Esophagus muscularis mucosa (tissue), 4 donors: ENCODE measurements at regions of chr9 and their contacts with region 1.

Region 1: DNA sequence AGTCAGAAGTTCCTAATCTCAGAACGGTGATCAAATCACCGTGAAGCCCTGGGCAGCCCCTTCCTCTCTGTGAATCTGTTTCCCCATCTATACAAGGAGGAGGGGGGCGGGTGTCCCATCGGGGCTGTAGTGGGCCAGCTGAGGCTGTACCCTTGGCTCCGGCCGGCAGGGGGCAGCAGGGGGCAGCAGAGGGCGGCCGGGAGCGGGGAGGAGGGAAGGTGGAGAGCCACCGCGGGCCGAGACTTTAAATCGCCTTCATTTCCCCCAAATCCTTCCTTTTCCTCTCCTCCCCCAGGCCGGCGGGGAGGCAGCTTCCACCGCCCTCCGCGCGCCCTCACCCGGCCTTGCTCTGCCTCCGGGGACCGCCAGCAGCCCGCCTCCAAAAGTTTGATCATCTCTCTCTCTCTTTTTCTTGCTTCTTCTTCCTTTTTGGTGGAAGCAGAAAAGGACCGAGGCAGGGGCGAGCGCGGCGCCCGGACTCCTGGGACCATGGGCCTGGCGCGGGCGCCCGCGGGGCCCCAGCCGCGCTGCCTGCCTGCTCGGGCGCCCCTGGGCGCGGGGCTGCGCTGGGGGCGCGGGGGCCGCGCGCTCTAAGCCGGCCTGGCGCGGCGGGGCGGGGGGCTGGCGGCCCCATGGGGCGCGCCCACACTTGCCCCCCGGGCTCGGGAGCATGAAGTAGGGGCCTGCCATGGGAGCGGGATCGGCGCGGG is at the start of gene COL27A1:
- DNase-seq: peak; percentile 95
- H3K4me3 ChIP-seq: peak within 1 kb of the TSS; percentile 59 to 74 (median 62)
- H3K27ac ChIP-seq: peak within 1 kb of the TSS; percentile 66 to 74 (median 68)
- H3K4me1 ChIP-seq: peaks cover 18 to 40% (median 38%) of the 10 kb centered on the region in 4 donors
- H3K27me3 ChIP-seq: peaks cover 9 to 56% (median 30%) of the 10 kb centered on the region in 4 donors
- CTCF ChIP-seq: peak; percentile 86 to 98 (median 97)
- EP300 ChIP-seq: no peak
- POLR2A ChIP-seq: no peak
- total RNA-seq, gene COL27A1: 1.8 to 3.3 (median 2.7) TPM

Region 2: DNA sequence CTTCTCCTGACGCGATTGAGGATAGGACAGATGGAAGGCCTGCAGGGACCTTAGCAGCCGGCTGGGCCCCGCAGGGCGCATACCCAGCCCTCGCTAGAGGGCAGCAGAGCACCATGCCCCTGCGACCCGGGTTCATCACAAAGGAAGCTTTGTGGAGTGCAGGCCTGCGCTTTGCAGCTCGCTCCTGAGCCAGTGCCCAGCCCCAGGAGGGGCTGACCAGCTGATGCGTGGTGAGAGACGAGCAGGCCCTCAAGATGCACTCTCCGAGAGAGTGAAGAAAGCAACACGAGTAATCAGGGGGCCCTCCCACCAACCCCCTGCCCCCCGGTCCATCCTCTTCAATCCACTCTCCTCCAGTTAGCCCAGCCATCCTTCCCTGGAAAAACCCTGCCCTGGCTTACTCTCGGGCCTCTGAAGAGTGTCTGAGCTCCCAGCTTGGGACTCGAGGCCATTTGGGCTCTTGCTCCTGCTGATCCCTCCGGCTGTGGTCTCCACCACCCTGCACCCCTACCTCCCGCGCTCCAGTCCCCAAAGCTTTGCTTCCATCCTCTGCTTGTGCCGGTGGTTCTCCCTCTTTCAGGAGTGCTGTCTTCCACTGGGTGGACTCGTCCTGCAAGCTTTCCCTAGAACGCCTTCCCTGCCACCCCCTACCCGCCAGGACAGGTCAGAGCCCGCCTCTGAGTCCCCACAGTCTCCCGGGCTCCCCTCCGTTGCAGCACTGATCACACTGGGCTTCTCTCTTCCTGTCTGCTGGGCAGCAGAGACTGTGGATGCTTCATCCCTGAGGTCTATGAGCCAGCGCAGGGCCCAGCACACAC is 47.2 kb before region 1 on chr9:
- intact Hi-C with region 1: loop called (anchors 5 kb)
- DNase-seq: no peak
- H3K4me3 ChIP-seq: no peak overlapping the region
- H3K27ac ChIP-seq: no peak overlapping the region
- H3K4me1 ChIP-seq: peaks cover 2 to 13% (median 5%) of the 10 kb centered on the region in 4 donors
- H3K27me3 ChIP-seq: peaks cover 0 to 12% (median 0%) of the 10 kb centered on the region in 4 donors
- CTCF ChIP-seq: peak; percentile 76 to 90 (median 79)
- EP300 ChIP-seq: no peak
- POLR2A ChIP-seq: no peak

Region 3: DNA sequence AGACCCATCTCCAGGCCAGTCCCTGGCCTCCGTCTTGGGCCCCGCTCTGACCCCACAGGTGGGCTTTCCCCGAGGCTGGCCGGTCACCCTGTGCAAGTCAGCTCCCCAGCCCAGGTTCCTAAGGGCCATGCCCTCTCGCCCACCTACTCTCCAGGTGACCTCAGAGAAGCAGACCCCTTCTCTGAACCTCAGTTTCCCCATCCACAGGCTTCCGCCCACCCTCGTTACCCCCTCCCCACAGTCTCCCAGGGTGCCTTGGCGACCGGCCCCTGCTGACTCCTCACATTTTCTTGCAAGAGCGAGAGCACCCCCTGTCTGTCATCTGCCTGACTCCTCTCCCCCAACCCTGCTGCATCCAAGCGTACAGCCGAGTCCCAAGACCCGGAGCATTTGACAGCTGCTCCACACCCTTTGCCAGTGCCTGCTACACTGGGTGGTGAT is 116.2 kb after region 1 on chr9:
- intact Hi-C with region 1: loop called (anchors 1 kb)
- DNase-seq: no peak
- H3K4me3 ChIP-seq: no peak overlapping the region
- H3K27ac ChIP-seq: no peak overlapping the region
- H3K4me1 ChIP-seq: no peaks in the 10 kb centered on the region
- H3K27me3 ChIP-seq: peaks cover 0 to 12% (median 0%) of the 10 kb centered on the region in 4 donors
- CTCF ChIP-seq: peak; percentile 42 to 59 (median 50)
- EP300 ChIP-seq: no peak
- POLR2A ChIP-seq: no peak

Region 4: GRCh38 chr9:114291064-114291474 is 135.7 kb after region 1 on chr9:
- intact Hi-C with region 1: loop called (anchors 1 kb)
- DNase-seq: no peak
- H3K4me3 ChIP-seq: no peak overlapping the region
- H3K27ac ChIP-seq: no peak overlapping the region
- H3K4me1 ChIP-seq: no peaks in the 10 kb centered on the region
- H3K27me3 ChIP-seq: peaks cover 0 to 13% (median 0%) of the 10 kb centered on the region in 4 donors
- CTCF ChIP-seq: peak; percentile 86 to 98 (median 92)
- EP300 ChIP-seq: no peak
- POLR2A ChIP-seq: no peak

Region 5: GRCh38 chr9:114606068-114606467 is 450.6 kb after region 1 on chr9:
- intact Hi-C with region 1: no loop called
- DNase-seq: no peak
- H3K4me3 ChIP-seq: no peak overlapping the region
- H3K27ac ChIP-seq: peak overlapping the region in 1 of 4 donors; percentile 34
- H3K4me1 ChIP-seq: peaks cover 8 to 25% (median 16%) of the 10 kb centered on the region in 4 donors
- H3K27me3 ChIP-seq: no peaks in the 10 kb centered on the region
- CTCF ChIP-seq: no peak
- EP300 ChIP-seq: no peak
- POLR2A ChIP-seq: no peak